Posterior vena cava (tissue), 2 donors: ENCODE measurements at regions of chr15 and their contacts with region 1.

Region 1: GRCh38 chr15:89614164-89614563 is 38.9 kb downstream of the TICRR start:
- DNase-seq: no peak

Region 2: GRCh38 chr15:89395996-89396395 is 218.2 kb before region 1 on chr15:
- intact Hi-C with region 1: no loop called
- DNase-seq: no peak

Region 3: GRCh38 chr15:89551502-89551901 is 62.7 kb before region 1 on chr15:
- intact Hi-C with region 1: no loop called
- DNase-seq: no peak

Region 4: GRCh38 chr15:89673165-89673512 is 59.0 kb after region 1 on chr15:
- intact Hi-C with region 1: no loop called
- DNase-seq: no peak

Region 5: DNA sequence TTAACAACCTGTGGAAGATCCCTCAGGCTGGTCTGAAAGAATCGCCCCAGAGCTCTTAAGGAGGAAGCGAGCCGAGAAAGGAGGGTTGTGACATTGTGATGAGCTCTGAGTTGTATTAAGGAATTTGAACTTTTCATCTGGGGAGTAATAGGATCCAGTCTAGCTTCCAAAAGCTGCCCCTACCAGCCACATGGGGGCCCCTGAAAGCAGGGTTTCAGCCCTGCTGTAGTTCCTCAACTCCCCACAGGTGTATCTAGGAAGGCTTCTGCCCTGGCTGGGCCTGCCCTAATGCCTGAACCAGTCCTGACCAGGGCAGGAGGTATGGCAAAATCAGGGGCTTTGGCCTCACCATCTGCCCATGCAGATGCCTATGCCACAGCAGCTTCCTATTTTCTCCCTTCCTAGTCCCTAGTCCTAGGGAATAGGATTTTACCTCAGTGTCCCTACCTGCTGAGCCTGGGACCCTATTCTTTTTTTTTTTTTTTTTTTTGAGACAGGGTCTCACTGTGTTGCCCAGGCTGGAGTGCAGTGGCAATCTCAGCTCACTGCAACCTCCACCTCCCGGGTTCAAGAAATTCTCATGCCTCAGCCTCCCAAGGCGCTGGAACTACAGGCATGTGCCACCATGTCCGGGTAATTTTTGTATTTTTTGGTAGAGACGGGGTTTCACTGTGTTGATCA is 284.6 kb after region 1 on chr15:
- intact Hi-C with region 1: no loop called
- DNase-seq: no peak

Region 6: GRCh38 chr15:90598031-90598577 is 983.9 kb after region 1 on chr15:
- intact Hi-C with region 1: loop called in 1 of 2 experiments (anchors 5 kb)
- DNase-seq: peak; percentile 85

Region 7: DNA sequence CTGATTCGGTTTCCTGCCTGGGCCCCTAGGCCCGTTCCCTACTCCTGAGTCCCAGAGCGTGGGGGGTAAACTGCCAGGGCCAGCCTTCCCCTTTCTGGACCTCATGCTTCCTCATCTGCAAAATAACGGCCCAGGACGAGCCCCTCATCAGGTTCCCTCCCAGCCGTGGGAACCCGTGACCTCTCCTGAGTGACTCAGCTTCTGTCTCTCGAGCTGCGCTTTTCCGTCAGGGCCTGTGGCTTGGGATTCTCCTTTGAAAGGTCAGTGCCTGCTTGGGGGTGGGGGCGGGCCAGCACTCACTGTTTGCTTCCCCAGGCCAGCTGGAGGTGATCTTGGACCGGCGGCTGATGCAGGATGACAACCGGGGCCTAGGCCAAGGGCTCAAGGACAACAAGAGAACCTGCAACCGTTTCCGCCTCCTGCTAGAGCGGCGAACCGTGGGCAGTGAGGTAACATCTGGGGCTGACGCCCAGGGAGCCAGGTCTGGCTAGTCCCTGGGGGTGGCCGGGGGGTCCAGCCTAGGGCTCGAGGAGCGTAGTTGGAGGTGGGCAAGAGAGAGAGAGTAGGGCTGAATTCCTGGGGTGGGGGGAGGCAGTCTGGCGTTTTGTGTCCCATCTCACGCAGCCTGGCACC is 1301.8 kb after region 1 on chr15:
- intact Hi-C with region 1: loop called in 1 of 2 experiments (anchors 5 kb)
- DNase-seq: peak; percentile 91